ENCODE measurements at regions of chr7 and their contacts with region 1.

Region 1: DNA sequence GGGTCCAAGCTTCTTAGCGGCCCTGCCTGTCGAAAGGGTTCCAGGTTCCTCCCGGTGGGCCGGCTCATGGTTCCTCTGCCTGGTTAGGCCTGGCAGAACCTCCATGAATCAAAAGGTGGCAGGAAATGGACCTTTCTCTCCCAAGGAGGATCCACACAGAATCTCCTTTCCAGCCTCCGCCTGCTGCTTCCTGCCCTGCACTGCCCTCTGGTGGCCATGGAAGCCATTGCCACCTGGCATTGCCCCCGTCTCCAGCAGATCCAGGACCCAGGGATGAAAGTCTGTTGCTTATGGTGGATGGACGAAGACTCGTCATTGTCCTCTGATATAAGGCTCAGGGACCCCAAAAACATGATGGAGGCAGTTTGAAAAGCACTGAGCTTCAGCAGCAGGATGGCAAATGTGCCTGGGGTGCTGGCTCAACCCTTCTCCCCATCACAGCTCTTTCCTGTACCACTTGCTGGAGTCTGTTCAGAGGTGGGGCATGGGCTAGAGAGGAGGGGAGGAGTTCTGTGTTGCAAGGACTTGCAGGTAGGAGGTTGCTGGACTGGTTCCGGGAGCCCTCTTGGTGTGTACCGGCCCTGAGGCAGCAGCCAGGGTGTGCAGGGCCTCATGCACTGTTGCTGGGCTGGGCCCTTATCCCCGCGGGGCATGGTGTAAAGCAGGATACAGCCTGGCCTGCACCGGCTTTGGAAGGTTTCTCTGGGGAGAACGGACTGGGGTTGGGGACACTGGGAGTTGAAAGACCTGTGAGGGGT is 11.3 kb upstream of the INMT start:
- DNase-seq: peak; percentile 23 to 85 (median 67)
- ATAC-seq: peak; percentile 52 to 64 (median 58)
- H3K4me3 ChIP-seq: no peak overlapping the region
- H3K4me3 Mint-ChIP-seq: peak overlapping the region in 1 of 3 donors; percentile 24
- H3K27ac ChIP-seq: no peak overlapping the region
- H3K27ac Mint-ChIP-seq: peak overlapping the region in 1 of 2 donors; percentile 64
- H3K4me1 ChIP-seq: peaks cover 17 to 51% of the 10 kb centered on the region in 2 experiments
- H3K4me1 Mint-ChIP-seq: peaks cover 36 to 48% (median 47%) of the 10 kb centered on the region in 3 donors
- H3K27me3 ChIP-seq: no peaks in the 10 kb centered on the region
- H3K27me3 Mint-ChIP-seq: no peaks in the 10 kb centered on the region

Region 2: DNA sequence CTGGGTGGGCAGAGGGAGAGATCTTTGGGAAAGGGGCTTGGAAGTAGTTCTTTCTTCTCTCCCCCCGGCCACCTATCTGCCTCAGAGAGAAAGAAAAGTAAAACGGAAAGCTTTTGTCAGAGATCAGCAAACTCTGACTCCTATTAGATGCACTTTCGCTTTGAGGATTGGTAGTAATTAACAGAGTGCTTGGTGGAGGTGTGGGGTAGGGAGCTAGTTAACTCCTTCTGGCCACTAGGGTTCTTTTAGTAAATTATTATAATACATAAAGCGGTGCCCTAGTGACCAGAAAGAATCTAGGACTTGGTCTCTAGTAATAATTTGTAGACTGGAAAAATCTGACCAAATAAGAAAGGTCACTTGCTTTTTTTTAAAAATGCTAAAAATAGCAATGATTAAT is 1648.9 kb before region 1 on chr7:
- CTCF ChIA-PET with region 1: no interaction called
- POLR2A ChIA-PET with region 1: no interaction called
- DNase-seq: peak in 2 of 35 experiments; percentile 2 to 8
- ATAC-seq: peak in 1 of 4 experiments; percentile 86
- H3K4me3 ChIP-seq: peak overlapping the region in 1 of 2 donors; percentile 52
- H3K4me3 Mint-ChIP-seq: peak overlapping the region; percentile 44 to 82 (median 65)
- H3K27ac ChIP-seq: no peak overlapping the region
- H3K27ac Mint-ChIP-seq: peak overlapping the region in 1 of 2 donors; percentile 94
- H3K4me1 ChIP-seq: peaks cover 0 to 6% of the 10 kb centered on the region in 2 experiments
- H3K4me1 Mint-ChIP-seq: peaks cover 13 to 19% (median 15%) of the 10 kb centered on the region in 3 donors
- H3K27me3 ChIP-seq: peaks cover 0 to 7% of the 10 kb centered on the region in 2 experiments
- H3K27me3 Mint-ChIP-seq: peaks cover 6 to 19% of the 10 kb centered on the region in 2 donors

Region 3: DNA sequence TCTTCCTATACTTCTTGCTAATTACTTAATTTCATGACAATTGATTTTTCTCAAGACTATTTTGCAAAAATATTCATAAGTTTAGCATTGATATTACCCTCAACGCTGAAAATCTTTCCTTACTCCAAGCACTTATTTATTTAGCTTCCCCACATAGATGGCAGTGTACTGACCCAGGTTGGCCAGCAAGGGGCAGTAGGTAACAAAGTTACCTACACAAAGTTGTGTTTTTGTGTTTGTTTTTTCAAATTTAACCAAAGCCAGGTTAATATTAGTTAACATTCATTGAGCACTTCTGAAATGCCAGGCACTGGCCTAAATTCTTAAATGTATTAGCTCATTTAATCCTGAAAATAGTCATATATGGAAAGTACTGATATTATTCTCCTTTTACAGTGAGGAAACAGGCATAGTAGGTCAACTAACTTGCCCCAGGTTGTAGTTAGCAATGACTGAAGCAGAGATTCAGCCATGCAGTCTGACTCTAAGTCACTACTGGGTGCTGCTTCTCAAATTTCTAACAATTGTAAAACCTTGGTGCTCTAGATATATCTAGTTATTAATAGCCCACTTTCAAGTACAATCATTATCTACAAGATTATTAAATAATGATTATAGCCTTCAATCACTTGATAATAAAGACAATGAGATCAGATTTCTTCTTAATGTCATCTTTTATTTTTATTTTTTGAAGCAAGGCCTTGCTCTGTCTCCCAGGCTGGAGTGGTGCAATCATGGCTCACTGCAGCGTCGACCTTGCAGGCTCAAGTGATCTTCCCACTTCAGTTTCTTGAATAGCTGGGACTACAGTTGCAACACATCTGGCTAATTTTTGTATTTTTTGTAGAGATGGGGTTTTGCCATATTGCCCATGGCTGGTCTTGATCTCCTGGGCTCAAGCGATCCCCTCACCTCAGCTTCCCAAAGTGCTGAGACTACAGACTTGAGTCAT is 230.2 kb before region 1 on chr7:
- CTCF ChIA-PET with region 1: no interaction called
- POLR2A ChIA-PET with region 1: no interaction called
- DNase-seq: peak in 20 of 35 experiments; percentile 2 to 52 (median 18)
- ATAC-seq: peak; percentile 52 to 62 (median 60)
- H3K4me3 ChIP-seq: no peak overlapping the region
- H3K4me3 Mint-ChIP-seq: no peak overlapping the region
- H3K27ac ChIP-seq: no peak overlapping the region
- H3K27ac Mint-ChIP-seq: no peak overlapping the region
- H3K4me1 ChIP-seq: no peaks in the 10 kb centered on the region
- H3K4me1 Mint-ChIP-seq: peaks cover 5 to 11% (median 6%) of the 10 kb centered on the region in 3 donors
- H3K27me3 ChIP-seq: no peaks in the 10 kb centered on the region
- H3K27me3 Mint-ChIP-seq: no peaks in the 10 kb centered on the region

Region 4: GRCh38 chr7:30682212-30683083 is 58.2 kb before region 1 on chr7 and contains the start of gene CRHR2:
- CTCF ChIA-PET with region 1: interaction called, 4 to 16 read pairs
- POLR2A ChIA-PET with region 1: no interaction called
- DNase-seq: peak in 30 of 35 experiments; percentile 2 to 54 (median 18)
- ATAC-seq: peak; percentile 72 to 93 (median 78)
- H3K4me3 ChIP-seq: peak within 1 kb of the TSS; percentile 40 to 46
- H3K4me3 Mint-ChIP-seq: peak within 1 kb of the TSS; percentile 66 to 84 (median 73)
- H3K27ac ChIP-seq: no peak within 1 kb of the TSS
- H3K27ac Mint-ChIP-seq: peak within 1 kb of the TSS in 1 of 2 donors; percentile 22
- H3K4me1 ChIP-seq: peaks cover 0 to 17% of the 10 kb centered on the region in 2 experiments
- H3K4me1 Mint-ChIP-seq: peaks cover 9 to 18% (median 12%) of the 10 kb centered on the region in 3 donors
- H3K27me3 ChIP-seq: peaks cover 11 to 73% of the 10 kb centered on the region in 2 experiments
- H3K27me3 Mint-ChIP-seq: peaks cover 50 to 65% of the 10 kb centered on the region in 2 donors
- total RNA-seq, gene CRHR2: 0.09 TPM in 1 of 5 donors, not detected in the others

Region 5: DNA sequence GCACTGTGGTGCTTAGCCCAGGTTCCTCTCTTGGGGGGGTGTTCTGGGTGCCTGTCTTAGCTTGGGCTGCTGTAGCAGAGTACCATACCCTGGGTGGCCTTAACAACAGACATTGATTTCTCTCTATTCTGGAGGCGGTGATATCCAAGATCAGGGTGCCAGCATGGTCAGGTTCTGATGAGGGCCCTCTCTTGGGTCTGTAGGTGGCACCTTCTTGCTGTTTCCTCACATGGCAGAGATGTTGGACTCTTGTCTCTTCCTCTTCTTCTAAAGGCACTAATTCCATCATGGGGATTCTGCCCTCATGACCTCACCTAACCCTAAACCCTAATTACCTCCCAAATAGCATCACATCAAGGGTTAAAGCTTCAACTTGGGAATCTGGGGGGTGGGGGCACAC is 38.4 kb before region 1 on chr7:
- CTCF ChIA-PET with region 1: interaction called, 11 to 41 read pairs
- POLR2A ChIA-PET with region 1: interaction called in 1 of 2 experiments, 4 read pairs
- DNase-seq: peak in 24 of 35 experiments; percentile 5 to 64 (median 26)
- ATAC-seq: peak; percentile 54 to 70 (median 64)
- H3K4me3 ChIP-seq: no peak overlapping the region
- H3K4me3 Mint-ChIP-seq: no peak overlapping the region
- H3K27ac ChIP-seq: no peak overlapping the region
- H3K27ac Mint-ChIP-seq: no peak overlapping the region
- H3K4me1 ChIP-seq: peaks cover 0 to 13% of the 10 kb centered on the region in 2 experiments
- H3K4me1 Mint-ChIP-seq: peaks cover 3 to 18% (median 16%) of the 10 kb centered on the region in 3 donors
- H3K27me3 ChIP-seq: peaks cover 0 to 11% of the 10 kb centered on the region in 2 experiments
- H3K27me3 Mint-ChIP-seq: peaks cover 0 to 3% of the 10 kb centered on the region in 2 donors

Region 6: GRCh38 chr7:30727061-30727945 is 13.3 kb before region 1 on chr7:
- CTCF ChIA-PET with region 1: interaction called, 11 to 33 read pairs
- POLR2A ChIA-PET with region 1: no interaction called
- DNase-seq: peak; percentile 30 to 77 (median 63)
- ATAC-seq: peak; percentile 92 to 95 (median 93)
- H3K4me3 ChIP-seq: peak overlapping the region; percentile 61 to 65
- H3K4me3 Mint-ChIP-seq: peak overlapping the region; percentile 78 to 89 (median 83)
- H3K27ac ChIP-seq: peak overlapping the region; percentile 71
- H3K27ac Mint-ChIP-seq: peak overlapping the region; percentile 96 to 98
- H3K4me1 ChIP-seq: peaks cover 30 to 67% of the 10 kb centered on the region in 2 experiments
- H3K4me1 Mint-ChIP-seq: peaks cover 62 to 72% (median 68%) of the 10 kb centered on the region in 3 donors
- H3K27me3 ChIP-seq: peaks cover 0 to 2% of the 10 kb centered on the region in 2 experiments
- H3K27me3 Mint-ChIP-seq: no peaks in the 10 kb centered on the region

Region 7: GRCh38 chr7:30800785-30801252 is 60.2 kb after region 1 on chr7:
- CTCF ChIA-PET with region 1: no interaction called
- POLR2A ChIA-PET with region 1: no interaction called
- DNase-seq: peak in 18 of 35 experiments; percentile 6 to 62 (median 13)
- ATAC-seq: peak in 3 of 4 experiments; percentile 34 to 55 (median 51)
- H3K4me3 ChIP-seq: no peak overlapping the region
- H3K4me3 Mint-ChIP-seq: no peak overlapping the region
- H3K27ac ChIP-seq: no peak overlapping the region
- H3K27ac Mint-ChIP-seq: no peak overlapping the region
- H3K4me1 ChIP-seq: peaks cover 6% of the 10 kb centered on the region in 2 experiments
- H3K4me1 Mint-ChIP-seq: peaks cover 2 to 14% (median 13%) of the 10 kb centered on the region in 3 donors
- H3K27me3 ChIP-seq: peaks cover 0 to 3% of the 10 kb centered on the region in 2 experiments
- H3K27me3 Mint-ChIP-seq: no peaks in the 10 kb centered on the region